ENCODE measurements at regions of chr9 and their contacts with region 1.

Region 1: GRCh38 chr9:114653556-114654159 is 3.9 kb downstream of the TEX53 start:
- DNase-seq: peak; percentile 72
- H3K4me3 Mint-ChIP-seq: no peak overlapping the region
- H3K27ac Mint-ChIP-seq: no peak overlapping the region
- H3K4me1 Mint-ChIP-seq: no peaks in the 10 kb centered on the region
- H3K27me3 Mint-ChIP-seq: no peaks in the 10 kb centered on the region
- CTCF ChIP-seq: peak; percentile 77

Region 2: GRCh38 chr9:114405294-114406034 is 248.2 kb before region 1 on chr9:
- CTCF ChIA-PET with region 1: interaction called, 34 read pairs
- intact Hi-C with region 1: loop called (anchors 1 kb)
- DNase-seq: peak; percentile 68
- H3K4me3 Mint-ChIP-seq: no peak overlapping the region
- H3K27ac Mint-ChIP-seq: no peak overlapping the region
- H3K4me1 Mint-ChIP-seq: no peaks in the 10 kb centered on the region
- H3K27me3 Mint-ChIP-seq: peaks cover 33% of the 10 kb centered on the region
- CTCF ChIP-seq: peak; percentile 55

Region 3: DNA sequence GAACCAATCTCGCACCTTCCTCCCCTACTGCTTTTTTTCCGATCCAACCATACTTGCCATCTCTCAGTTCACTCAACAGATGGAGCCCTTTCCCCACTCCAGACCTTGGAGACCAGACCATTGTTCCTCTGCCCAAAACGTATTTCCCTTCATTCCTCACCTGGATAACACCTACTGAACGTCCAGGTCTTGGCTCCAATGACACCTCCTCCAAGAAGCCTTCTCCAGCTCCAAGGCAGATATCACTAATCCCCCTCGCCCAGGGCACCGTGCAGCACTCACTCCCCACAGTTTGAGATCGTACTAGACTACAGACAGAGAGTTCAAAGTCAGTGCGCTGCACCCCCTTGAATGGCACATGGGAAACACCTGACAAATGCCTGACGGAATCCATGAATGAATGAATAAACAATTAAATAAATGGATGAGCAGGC is 218.8 kb before region 1 on chr9:
- CTCF ChIA-PET with region 1: interaction called, 8 read pairs
- intact Hi-C with region 1: loop called (anchors 1 kb)
- DNase-seq: peak; percentile 34
- H3K4me3 Mint-ChIP-seq: no peak overlapping the region
- H3K27ac Mint-ChIP-seq: no peak overlapping the region
- H3K4me1 Mint-ChIP-seq: no peaks in the 10 kb centered on the region
- H3K27me3 Mint-ChIP-seq: peaks cover 22% of the 10 kb centered on the region
- CTCF ChIP-seq: peak; percentile 33

Region 4: DNA sequence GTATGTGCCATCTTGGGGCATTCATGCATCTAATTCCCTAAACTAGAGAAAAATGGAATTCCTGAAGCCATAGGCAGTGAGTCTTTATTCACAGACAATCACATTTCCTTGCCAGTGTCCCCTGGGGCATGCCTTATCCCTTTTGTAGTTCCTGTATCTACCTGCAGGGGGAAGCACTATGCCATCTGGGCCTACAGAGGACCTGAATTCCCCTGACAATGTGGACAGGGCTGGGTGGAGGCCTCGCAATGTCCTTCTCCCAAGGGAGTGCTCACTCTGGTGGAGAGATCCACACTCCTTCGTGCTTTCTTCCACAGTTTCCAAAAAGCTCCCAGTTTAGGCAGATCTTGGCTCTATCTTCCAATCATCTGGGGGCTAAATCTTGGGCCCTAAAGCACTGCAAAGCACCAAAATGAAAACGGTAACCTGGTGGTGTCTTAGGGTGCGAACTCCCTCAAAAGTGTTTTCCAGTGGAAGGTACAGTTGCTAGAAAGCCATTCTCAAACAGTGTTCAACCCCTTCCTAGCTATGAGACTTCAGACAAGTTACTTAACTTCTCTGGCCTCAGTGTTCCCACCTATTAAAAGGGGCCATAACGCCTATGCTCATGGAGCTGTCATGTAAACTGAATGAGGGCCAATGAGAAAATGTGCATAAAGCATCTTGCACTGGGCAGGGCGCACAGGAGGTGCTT is 165.9 kb before region 1 on chr9:
- CTCF ChIA-PET with region 1: interaction called, 5 read pairs
- intact Hi-C with region 1: loop called (anchors 1 kb)
- DNase-seq: peak; percentile 72
- H3K4me3 Mint-ChIP-seq: no peak overlapping the region
- H3K27ac Mint-ChIP-seq: no peak overlapping the region
- H3K4me1 Mint-ChIP-seq: peaks cover 23% of the 10 kb centered on the region
- H3K27me3 Mint-ChIP-seq: no peaks in the 10 kb centered on the region
- CTCF ChIP-seq: peak; percentile 58

Region 5: GRCh38 chr9:114538241-114538640 is 115.4 kb before region 1 on chr9:
- CTCF ChIA-PET with region 1: interaction called, 8 read pairs
- intact Hi-C with region 1: loop called (anchors 5 kb)
- DNase-seq: peak; percentile 23
- H3K4me3 Mint-ChIP-seq: no peak overlapping the region
- H3K27ac Mint-ChIP-seq: no peak overlapping the region
- H3K4me1 Mint-ChIP-seq: no peaks in the 10 kb centered on the region
- H3K27me3 Mint-ChIP-seq: peaks cover 10% of the 10 kb centered on the region
- CTCF ChIP-seq: no peak